ENCODE measurements at regions of chr13 and their contacts with region 1.

Region 1: DNA sequence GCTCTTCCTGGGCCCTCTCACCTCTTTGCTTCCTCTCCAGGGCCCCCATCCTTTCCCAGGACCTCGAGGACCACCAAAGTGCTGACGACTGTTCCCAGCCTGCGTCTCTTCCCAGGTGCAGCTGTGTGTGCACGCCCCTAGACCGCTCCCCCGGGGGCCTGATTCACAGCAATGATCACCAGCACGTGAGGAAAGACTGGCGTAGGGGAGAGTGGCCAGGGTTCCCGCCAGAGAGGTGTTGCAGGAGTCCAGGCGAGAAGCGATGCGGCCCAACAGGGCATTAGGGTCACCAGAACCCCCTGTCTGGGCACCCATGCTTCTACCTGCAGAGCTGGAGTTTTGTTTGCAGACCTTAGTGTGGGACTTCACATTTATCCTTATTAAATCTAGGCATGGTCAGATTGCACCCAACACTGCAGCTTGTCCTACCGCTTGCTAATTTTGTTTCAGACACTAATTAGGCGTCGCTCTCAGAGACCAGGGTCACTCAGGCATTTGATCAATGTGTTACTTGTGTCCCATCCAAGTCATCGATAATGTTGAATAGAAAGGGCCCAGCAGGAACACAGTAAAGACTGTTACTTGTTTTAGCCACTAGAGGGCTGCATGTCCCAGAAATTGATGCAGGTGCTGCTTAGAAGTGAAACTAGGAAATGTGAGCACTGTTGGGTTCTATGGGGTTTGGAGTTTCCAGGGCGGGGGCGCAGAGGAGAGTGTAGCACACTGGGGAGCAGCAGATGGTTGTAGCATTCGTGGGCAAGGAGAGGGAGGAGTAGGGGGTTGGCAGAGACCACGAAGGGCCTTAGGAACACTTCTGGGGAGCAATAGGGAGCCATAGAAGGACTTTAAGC is 53.2 kb downstream of the CDADC1 start:
- DNase-seq: no peak
- H3K4me3 ChIP-seq: peak overlapping the region; percentile 24 to 60 (median 32)
- H3K27ac ChIP-seq: peak overlapping the region in 1 of 2 donors; percentile 77
- H3K4me1 ChIP-seq: peaks cover 12 to 14% of the 10 kb centered on the region in 2 donors
- H3K27me3 ChIP-seq: no peaks in the 10 kb centered on the region
- CTCF ChIP-seq: peak; percentile 82 to 88 (median 88)
- POLR2A ChIP-seq: no peak

Region 2: DNA sequence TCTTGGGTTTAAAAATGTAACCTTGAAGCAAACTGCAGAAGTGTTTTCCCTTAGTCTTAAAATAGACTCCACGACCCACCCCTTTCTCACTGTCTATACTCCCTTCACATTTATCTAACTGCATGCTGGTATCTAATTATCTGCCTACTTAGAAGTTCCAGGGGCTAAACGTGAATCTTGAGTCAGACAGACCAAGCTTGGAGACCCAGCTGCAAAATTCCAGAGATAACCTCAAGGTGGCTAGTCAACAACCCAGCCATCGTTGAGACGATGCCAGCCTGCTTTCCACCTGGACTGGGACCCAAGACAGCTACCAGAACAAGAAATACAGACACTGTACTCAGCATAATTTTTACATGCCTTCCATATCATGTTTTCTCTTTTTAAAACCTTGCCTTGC is 28.9 kb after region 1 on chr13:
- intact Hi-C with region 1: no loop called
- DNase-seq: no peak
- H3K4me3 ChIP-seq: no peak overlapping the region
- H3K27ac ChIP-seq: no peak overlapping the region
- H3K4me1 ChIP-seq: no peaks in the 10 kb centered on the region
- H3K27me3 ChIP-seq: no peaks in the 10 kb centered on the region
- CTCF ChIP-seq: no peak
- POLR2A ChIP-seq: no peak

Region 3: DNA sequence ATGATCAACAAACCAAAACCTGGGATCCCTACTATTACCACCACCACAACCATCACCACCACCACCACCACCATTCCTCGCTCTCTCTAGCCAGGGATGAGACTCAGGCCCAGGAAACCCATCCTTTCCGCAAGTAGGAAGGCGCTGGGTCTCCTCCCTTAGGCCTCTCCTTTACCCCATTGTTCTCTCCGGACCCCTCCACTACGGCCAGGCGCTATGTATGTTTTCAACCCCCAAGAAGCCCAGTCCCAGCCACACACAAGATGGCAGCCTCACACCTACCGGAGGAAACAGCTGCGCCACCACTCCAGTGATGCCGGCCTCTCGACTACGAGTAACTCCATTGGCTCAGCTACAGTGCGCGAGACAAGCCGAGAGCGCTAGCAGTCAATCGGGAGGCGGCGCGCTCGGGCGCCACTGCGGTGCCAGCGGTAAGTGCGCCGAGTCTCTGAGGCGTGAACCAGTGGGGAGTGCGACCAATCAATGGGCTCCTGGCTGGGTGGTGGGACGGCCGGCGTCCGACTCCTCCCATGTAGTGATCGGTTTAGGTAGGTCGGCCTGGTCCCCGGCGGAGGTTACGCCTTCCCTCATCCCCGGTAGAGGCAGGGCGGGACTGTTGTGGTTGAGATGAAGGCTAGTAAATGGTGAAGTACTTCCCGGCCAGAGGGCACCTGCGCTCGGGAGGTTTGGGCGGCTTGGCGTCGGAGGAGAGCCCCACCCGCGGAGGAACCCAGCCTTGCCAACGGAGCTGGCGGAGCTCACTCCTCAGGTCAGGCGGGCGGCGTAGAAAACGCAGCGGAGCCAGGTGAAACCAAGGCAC is 142.9 kb after region 1 on chr13 and contains the starts of genes CAB39L and SETDB2:
- intact Hi-C with region 1: loop called (anchors 5 kb)
- DNase-seq: peak; percentile 99 to 100
- H3K4me3 ChIP-seq: peak within 1 kb of the TSS; percentile 83 to 84 (median 84)
- H3K27ac ChIP-seq: peak within 1 kb of the TSS; percentile 97 to 98
- H3K4me1 ChIP-seq: peaks cover 0 to 7% of the 10 kb centered on the region in 2 donors
- H3K27me3 ChIP-seq: no peaks in the 10 kb centered on the region
- CTCF ChIP-seq: peak; percentile 48 to 69 (median 57)
- POLR2A ChIP-seq: peak; percentile 39
- total RNA-seq, gene CAB39L: 40.0 to 92.1 (median 44.8) TPM
- total RNA-seq, gene SETDB2: 9.9 to 17.0 (median 12.8) TPM

Region 4: GRCh38 chr13:49472186-49472585 is 171.2 kb after region 1 on chr13:
- intact Hi-C with region 1: no loop called
- DNase-seq: no peak
- H3K4me3 ChIP-seq: no peak overlapping the region
- H3K27ac ChIP-seq: no peak overlapping the region
- H3K4me1 ChIP-seq: no peaks in the 10 kb centered on the region
- H3K27me3 ChIP-seq: no peaks in the 10 kb centered on the region
- CTCF ChIP-seq: no peak
- POLR2A ChIP-seq: no peak

Region 5: GRCh38 chr13:49606747-49607648 is 306.0 kb after region 1 on chr13:
- intact Hi-C with region 1: loop called (anchors 10 kb)
- DNase-seq: peak; percentile 85 to 88
- H3K4me3 ChIP-seq: peak overlapping the region; percentile 31 to 54 (median 41)
- H3K27ac ChIP-seq: no peak overlapping the region
- H3K4me1 ChIP-seq: no peaks in the 10 kb centered on the region
- H3K27me3 ChIP-seq: no peaks in the 10 kb centered on the region
- CTCF ChIP-seq: peak; percentile 31 to 77 (median 72)
- POLR2A ChIP-seq: no peak